ENCODE measurements at regions of chr9 and their contacts with region 1.

Region 1: DNA sequence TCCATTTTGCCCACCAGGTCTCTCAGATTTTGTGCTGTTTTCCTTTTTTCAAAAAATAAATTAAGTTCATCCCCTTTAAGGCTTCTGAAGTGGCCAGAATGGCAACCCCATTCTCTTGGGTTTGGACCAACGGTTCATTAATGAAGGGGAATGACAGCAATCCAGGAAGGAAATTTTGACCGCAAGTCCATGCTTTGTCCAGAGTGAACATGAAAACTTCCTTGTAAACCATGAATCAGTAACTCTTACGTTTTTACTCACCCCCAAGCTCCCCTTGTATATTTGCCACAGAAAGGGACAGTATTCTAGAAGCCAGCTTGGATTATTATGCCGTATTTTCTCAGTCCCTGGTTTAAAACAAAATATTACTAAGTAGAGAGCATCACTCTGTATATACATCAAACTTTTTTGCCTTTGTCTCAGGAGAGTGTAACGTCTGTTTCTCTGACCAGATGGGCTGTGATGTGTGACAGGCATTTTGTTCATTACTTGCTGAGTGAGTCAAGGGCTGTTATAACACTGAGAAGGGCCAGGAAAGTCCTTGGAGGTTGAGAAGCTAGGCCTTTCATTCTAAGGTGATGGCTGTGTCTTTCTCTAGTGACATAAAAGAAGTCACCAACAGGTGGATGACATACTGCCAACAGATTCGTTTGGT is 148.2 kb downstream of the SMARCA2 start:
- DNase-seq: no peak
- ATAC-seq: no peak
- H3K4me3 ChIP-seq: no peak overlapping the region
- H3K4me3 Mint-ChIP-seq: no peak overlapping the region
- H3K27ac ChIP-seq: no peak overlapping the region
- H3K27ac Mint-ChIP-seq: no peak overlapping the region
- H3K4me1 ChIP-seq: peaks cover 1% of the 10 kb centered on the region
- H3K4me1 Mint-ChIP-seq: peaks cover 61% of the 10 kb centered on the region
- H3K27me3 ChIP-seq: no peaks in the 10 kb centered on the region
- H3K27me3 Mint-ChIP-seq: no peaks in the 10 kb centered on the region
- CTCF ChIP-seq: no peak

Region 2: GRCh38 chr9:2043881-2044462 is 119.4 kb before region 1 on chr9:
- CTCF ChIA-PET with region 1: no interaction called
- POLR2A ChIA-PET with region 1: no interaction called
- intact Hi-C with region 1: no loop called
- DNase-seq: no peak
- ATAC-seq: peak; percentile 21
- H3K4me3 ChIP-seq: no peak overlapping the region
- H3K4me3 Mint-ChIP-seq: peak overlapping the region; percentile 2
- H3K27ac ChIP-seq: no peak overlapping the region
- H3K27ac Mint-ChIP-seq: peak overlapping the region; percentile 77
- H3K4me1 ChIP-seq: peaks cover 9% of the 10 kb centered on the region
- H3K4me1 Mint-ChIP-seq: peaks cover 64% of the 10 kb centered on the region
- H3K27me3 ChIP-seq: no peaks in the 10 kb centered on the region
- H3K27me3 Mint-ChIP-seq: no peaks in the 10 kb centered on the region
- CTCF ChIP-seq: no peak

Region 3: DNA sequence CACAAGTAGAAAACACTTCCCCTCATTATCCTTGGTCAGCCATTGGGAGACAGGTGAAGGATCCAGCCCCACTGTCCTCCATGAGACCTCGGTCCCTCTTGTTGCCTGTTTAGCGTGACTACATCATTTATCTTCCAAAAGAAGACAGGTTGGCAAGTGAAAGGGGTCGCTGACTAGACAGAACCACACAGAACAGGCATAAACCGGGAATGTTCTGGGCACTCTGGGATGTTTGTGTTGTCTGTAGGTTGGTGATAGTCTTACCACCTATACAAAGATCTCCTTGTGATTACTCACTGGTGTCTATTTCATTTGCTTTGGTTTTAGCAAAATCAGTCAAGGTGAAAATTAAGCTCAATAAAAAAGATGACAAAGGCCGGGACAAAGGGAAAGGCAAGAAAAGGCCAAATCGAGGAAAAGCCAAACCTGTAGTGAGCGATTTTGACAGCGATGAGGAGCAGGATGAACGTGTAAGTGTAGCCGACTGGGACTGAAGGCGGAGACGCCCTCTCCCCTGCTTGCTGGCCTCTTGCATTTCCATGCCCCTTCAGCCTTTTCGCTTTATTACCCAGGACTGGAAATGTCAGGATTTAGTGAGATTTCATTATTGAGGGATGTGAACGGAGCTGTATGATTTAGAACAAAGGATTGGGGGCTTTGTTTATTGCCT is 27.7 kb after region 1 on chr9:
- CTCF ChIA-PET with region 1: no interaction called
- POLR2A ChIA-PET with region 1: no interaction called
- intact Hi-C with region 1: loop called in 1 of 2 experiments (anchors 1 kb)
- DNase-seq: no peak
- ATAC-seq: no peak
- H3K4me3 ChIP-seq: no peak overlapping the region
- H3K4me3 Mint-ChIP-seq: no peak overlapping the region
- H3K27ac ChIP-seq: no peak overlapping the region
- H3K27ac Mint-ChIP-seq: no peak overlapping the region
- H3K4me1 ChIP-seq: no peaks in the 10 kb centered on the region
- H3K4me1 Mint-ChIP-seq: no peaks in the 10 kb centered on the region
- H3K27me3 ChIP-seq: no peaks in the 10 kb centered on the region
- H3K27me3 Mint-ChIP-seq: no peaks in the 10 kb centered on the region
- CTCF ChIP-seq: no peak